Prostate gland (tissue), 2 donors: ENCODE measurements at regions of chr1 and their contacts with region 1.

Region 1: DNA sequence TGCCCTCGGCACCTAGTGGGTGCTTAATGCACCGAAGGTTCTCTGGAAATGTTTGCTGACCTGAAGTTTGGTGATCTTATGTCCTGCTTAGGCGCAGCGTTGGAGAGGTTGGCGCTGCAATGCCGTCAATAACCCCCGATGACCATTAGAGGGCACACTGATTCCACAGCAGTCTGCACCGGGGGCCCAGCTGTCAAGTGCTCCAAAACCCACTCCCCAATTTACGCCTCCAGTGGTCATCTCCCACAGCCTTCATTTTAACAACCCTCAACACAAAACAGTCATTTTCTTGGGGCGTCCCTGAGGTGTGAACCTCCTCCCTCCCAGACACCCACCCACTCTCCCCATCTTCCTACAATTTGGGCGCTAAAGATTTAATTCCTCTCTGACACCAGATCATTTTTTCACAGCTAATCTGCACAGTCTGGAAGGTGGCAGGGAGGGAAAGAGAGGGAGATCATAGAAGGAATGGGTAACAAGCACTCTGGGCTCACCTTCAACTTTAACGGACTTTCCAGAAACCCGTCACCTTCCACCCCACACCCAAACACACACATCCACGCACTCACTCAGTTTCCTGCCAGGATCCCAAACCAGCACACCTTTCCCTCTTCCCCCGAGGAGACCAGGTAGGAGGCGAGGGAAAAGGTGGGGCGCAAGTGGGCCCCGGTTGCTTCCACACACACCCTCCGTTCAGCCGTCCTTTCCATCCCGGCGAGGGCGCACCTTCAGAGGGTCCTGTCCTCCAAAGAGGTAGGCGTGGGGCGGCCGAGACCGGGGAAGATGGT is 576 bp upstream of the NPR1 start:
- DNase-seq: peak; percentile 38
- H3K4me3 ChIP-seq: peak overlapping the region; percentile 24 to 33
- H3K27ac ChIP-seq: no peak overlapping the region
- H3K4me1 ChIP-seq: no peaks in the 10 kb centered on the region
- H3K27me3 ChIP-seq: no peaks in the 10 kb centered on the region
- CTCF ChIP-seq: peak; percentile 48 to 75 (median 65)
- POLR2A ChIP-seq: no peak

Region 2: DNA sequence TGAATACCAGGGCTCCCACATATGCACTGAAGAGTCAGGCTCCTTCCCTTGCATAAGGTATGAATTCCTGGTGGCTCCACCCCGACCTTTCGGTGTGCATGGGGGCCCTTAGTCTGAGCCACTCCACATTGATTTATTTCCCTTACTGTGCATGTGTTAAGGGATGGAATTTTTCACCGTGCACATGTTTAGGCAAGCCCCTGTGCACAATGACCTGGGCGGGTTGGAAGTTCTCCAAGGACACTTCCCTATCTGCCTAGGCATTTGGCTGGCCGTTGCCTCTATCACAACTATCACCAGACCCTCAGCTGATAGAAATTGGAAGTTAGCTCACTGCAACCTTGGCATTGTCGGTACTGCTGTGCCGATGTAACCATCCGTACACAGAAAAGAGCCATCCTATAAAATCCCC is 151.8 kb before region 1 on chr1:
- intact Hi-C with region 1: no loop called
- DNase-seq: peak; percentile 78
- H3K4me3 ChIP-seq: no peak overlapping the region
- H3K27ac ChIP-seq: peak overlapping the region in 1 of 2 donors; percentile 58
- H3K4me1 ChIP-seq: no peaks in the 10 kb centered on the region
- H3K27me3 ChIP-seq: no peaks in the 10 kb centered on the region
- CTCF ChIP-seq: no peak
- POLR2A ChIP-seq: no peak

Region 3: GRCh38 chr1:153774780-153775457 is 97.0 kb after region 1 on chr1 and contains the start of gene SLC27A3:
- intact Hi-C with region 1: loop called (anchors 5 kb)
- DNase-seq: peak; percentile 69
- H3K4me3 ChIP-seq: peak within 1 kb of the TSS; percentile 65 to 68
- H3K27ac ChIP-seq: peak within 1 kb of the TSS; percentile 85
- H3K4me1 ChIP-seq: peaks cover 7% of the 10 kb centered on the region
- H3K27me3 ChIP-seq: no peaks in the 10 kb centered on the region
- CTCF ChIP-seq: no peak
- POLR2A ChIP-seq: no peak
- total RNA-seq, gene SLC27A3: 27.4 to 30.9 TPM